CD4-positive, alpha-beta T cell (primary cell): ENCODE measurements at regions of chr1 and their contacts with region 1.

Region 1: GRCh38 chr1:43171876-43172526 is at the starts of genes CFAP57 and EBNA1BP2:
- DNase-seq: peak; percentile 83 to 97 (median 88)
- ATAC-seq: peak; percentile 75
- H3K4me3 ChIP-seq: peak within 1 kb of the TSS; percentile 93
- H3K4me3 Mint-ChIP-seq: peak within 1 kb of the TSS; percentile 96
- H3K27ac ChIP-seq: peak within 1 kb of the TSS; percentile 25 to 69
- H3K27ac Mint-ChIP-seq: peak within 1 kb of the TSS; percentile 82
- H3K4me1 ChIP-seq: peaks cover 14% of the 10 kb centered on the region
- H3K4me1 Mint-ChIP-seq: peaks cover 33% of the 10 kb centered on the region
- H3K27me3 ChIP-seq: peaks cover 9 to 14% of the 10 kb centered on the region in 2 experiments
- H3K27me3 Mint-ChIP-seq: peaks cover 16% of the 10 kb centered on the region
- CTCF ChIP-seq: no peak
- total RNA-seq, gene CFAP57: not detected
- total RNA-seq, gene EBNA1BP2: 14.8 to 15.1 TPM

Region 2: GRCh38 chr1:42335050-42335808 is 836.8 kb before region 1 on chr1 and contains the start of gene FOXJ3:
- CTCF ChIA-PET with region 1: no interaction called
- POLR2A ChIA-PET with region 1: no interaction called
- intact Hi-C with region 1: loop called in 1 of 2 experiments (anchors 5 kb)
- DNase-seq: peak; percentile 87 to 99 (median 92)
- ATAC-seq: peak; percentile 93
- H3K4me3 ChIP-seq: peak within 1 kb of the TSS; percentile 88
- H3K4me3 Mint-ChIP-seq: peak within 1 kb of the TSS; percentile 97
- H3K27ac ChIP-seq: peak within 1 kb of the TSS; percentile 84 to 86
- H3K27ac Mint-ChIP-seq: peak within 1 kb of the TSS; percentile 86
- H3K4me1 ChIP-seq: peaks cover 17% of the 10 kb centered on the region
- H3K4me1 Mint-ChIP-seq: peaks cover 55% of the 10 kb centered on the region
- H3K27me3 ChIP-seq: no peaks in the 10 kb centered on the region
- H3K27me3 Mint-ChIP-seq: no peaks in the 10 kb centered on the region
- CTCF ChIP-seq: no peak
- total RNA-seq, gene FOXJ3: 73.1 to 74.9 TPM

Region 3: GRCh38 chr1:42816585-42817434 is 355.2 kb before region 1 on chr1 and contains the starts of genes ERMAP and SVBP:
- CTCF ChIA-PET with region 1: no interaction called
- POLR2A ChIA-PET with region 1: no interaction called
- intact Hi-C with region 1: loop called in 1 of 2 experiments (anchors 2 kb)
- DNase-seq: peak; percentile 86 to 98 (median 94)
- ATAC-seq: peak; percentile 88
- H3K4me3 ChIP-seq: peak within 1 kb of the TSS; percentile 78
- H3K4me3 Mint-ChIP-seq: peak within 1 kb of the TSS; percentile 96
- H3K27ac ChIP-seq: peak within 1 kb of the TSS; percentile 77 to 79
- H3K27ac Mint-ChIP-seq: peak within 1 kb of the TSS; percentile 89
- H3K4me1 ChIP-seq: peaks cover 10% of the 10 kb centered on the region
- H3K4me1 Mint-ChIP-seq: peaks cover 27% of the 10 kb centered on the region
- H3K27me3 ChIP-seq: no peaks in the 10 kb centered on the region
- H3K27me3 Mint-ChIP-seq: no peaks in the 10 kb centered on the region
- CTCF ChIP-seq: no peak
- total RNA-seq, gene ERMAP: 4.4 to 5.0 TPM
- total RNA-seq, gene SVBP: 19.2 to 21.3 TPM

Region 4: DNA sequence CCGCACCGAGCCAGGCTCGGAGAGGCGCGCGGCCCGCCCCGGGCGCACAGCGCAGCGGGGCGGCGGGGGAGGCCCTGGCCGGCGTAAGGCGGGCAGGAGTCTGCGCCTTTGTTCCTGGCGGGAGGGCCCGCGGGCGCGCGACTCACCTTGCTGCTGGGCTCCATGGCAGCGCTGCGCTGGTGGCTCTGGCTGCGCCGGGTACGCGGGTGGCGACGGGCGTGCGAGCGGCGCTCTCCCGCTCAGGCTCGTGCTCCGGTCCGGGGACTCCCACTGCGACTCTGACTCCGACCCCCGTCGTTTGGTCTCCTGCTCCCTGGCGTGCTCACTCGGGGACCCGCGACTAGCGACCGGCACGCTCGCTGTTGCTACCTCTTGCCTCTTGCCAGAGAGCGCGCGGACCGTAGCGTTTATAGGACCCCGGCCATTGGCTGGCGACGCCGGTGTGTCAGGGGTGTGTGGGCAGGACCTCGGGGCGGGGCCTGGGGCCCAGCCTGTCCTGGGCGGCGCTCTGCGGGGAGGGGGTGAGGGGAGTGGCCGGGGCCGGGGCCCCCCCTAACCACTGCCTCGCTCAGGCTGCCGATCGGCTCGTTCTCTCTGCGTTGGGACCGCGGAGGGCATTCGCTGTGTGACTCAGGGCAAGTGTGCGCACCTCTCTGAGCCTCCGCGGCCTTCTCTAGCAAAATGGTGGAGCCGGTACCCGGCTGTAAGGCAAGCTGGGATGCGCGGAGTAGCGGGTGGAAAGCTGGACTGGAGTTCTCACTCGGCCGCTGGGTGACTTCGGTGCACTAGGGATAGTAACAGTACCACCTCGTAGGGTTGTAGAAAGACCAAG is 213.3 kb before region 1 on chr1 and contains the start of gene SLC2A1:
- CTCF ChIA-PET with region 1: no interaction called
- POLR2A ChIA-PET with region 1: no interaction called
- intact Hi-C with region 1: loop called in 1 of 2 experiments (anchors 5 kb)
- DNase-seq: peak; percentile 89 to 98 (median 94)
- ATAC-seq: peak; percentile 90
- H3K4me3 ChIP-seq: peak within 1 kb of the TSS; percentile 89
- H3K4me3 Mint-ChIP-seq: peak within 1 kb of the TSS; percentile 100
- H3K27ac ChIP-seq: peak within 1 kb of the TSS; percentile 73 to 76
- H3K27ac Mint-ChIP-seq: peak within 1 kb of the TSS; percentile 96
- H3K4me1 ChIP-seq: peaks cover 54% of the 10 kb centered on the region
- H3K4me1 Mint-ChIP-seq: peaks cover 60% of the 10 kb centered on the region
- H3K27me3 ChIP-seq: no peaks in the 10 kb centered on the region
- H3K27me3 Mint-ChIP-seq: no peaks in the 10 kb centered on the region
- CTCF ChIP-seq: no peak
- total RNA-seq, gene SLC2A1: 78.6 to 80.9 TPM

Region 5: GRCh38 chr1:43719063-43719462 is 547.1 kb after region 1 on chr1:
- CTCF ChIA-PET with region 1: no interaction called
- POLR2A ChIA-PET with region 1: no interaction called
- intact Hi-C with region 1: no loop called
- DNase-seq: no peak
- ATAC-seq: no peak
- H3K4me3 ChIP-seq: no peak overlapping the region
- H3K4me3 Mint-ChIP-seq: no peak overlapping the region
- H3K27ac ChIP-seq: no peak overlapping the region
- H3K27ac Mint-ChIP-seq: no peak overlapping the region
- H3K4me1 ChIP-seq: no peaks in the 10 kb centered on the region
- H3K4me1 Mint-ChIP-seq: peaks cover 4% of the 10 kb centered on the region
- H3K27me3 ChIP-seq: no peaks in the 10 kb centered on the region
- H3K27me3 Mint-ChIP-seq: no peaks in the 10 kb centered on the region
- CTCF ChIP-seq: no peak

Region 6: GRCh38 chr1:43974443-43975248 is 802.6 kb after region 1 on chr1 and contains the start of gene ATP6V0B:
- CTCF ChIA-PET with region 1: no interaction called
- POLR2A ChIA-PET with region 1: no interaction called
- intact Hi-C with region 1: loop called in 1 of 2 experiments (anchors 10 kb)
- DNase-seq: peak; percentile 85 to 96 (median 91)
- ATAC-seq: peak; percentile 72
- H3K4me3 ChIP-seq: peak within 1 kb of the TSS; percentile 99
- H3K4me3 Mint-ChIP-seq: peak within 1 kb of the TSS; percentile 96
- H3K27ac ChIP-seq: peak within 1 kb of the TSS; percentile 78 to 86
- H3K27ac Mint-ChIP-seq: peak within 1 kb of the TSS; percentile 92
- H3K4me1 ChIP-seq: peaks cover 61% of the 10 kb centered on the region
- H3K4me1 Mint-ChIP-seq: peaks cover 68% of the 10 kb centered on the region
- H3K27me3 ChIP-seq: peaks cover under 1% of the 10 kb centered on the region in 2 experiments
- H3K27me3 Mint-ChIP-seq: peaks cover under 1% of the 10 kb centered on the region
- CTCF ChIP-seq: no peak
- total RNA-seq, gene ATP6V0B: 42.9 to 47.0 TPM